ENCODE measurements at regions of chr2 and their contacts with region 1.

Region 1: DNA sequence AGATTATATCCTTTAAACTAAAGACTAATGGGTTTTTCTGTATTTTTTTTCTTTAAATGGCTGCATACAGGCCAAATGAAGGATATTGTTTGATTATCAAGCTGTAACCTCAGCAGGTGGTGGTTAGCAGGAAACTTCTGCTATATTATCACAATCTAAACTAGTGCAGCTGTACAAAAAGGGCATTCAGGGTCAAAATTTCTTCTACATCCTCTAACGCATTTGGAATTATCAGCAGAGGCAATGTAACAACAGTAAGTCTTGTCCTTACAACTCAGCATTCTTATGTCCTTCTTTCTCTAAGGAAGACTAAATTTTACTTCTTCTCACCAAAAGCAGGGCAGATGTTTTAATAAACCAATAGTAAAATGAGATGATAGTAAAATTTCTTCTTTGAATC is 135.8 kb upstream of the FN1 start:
- DNase-seq: no peak
- H3K4me3 ChIP-seq: no peak overlapping the region
- H3K27ac ChIP-seq: no peak overlapping the region
- H3K4me1 ChIP-seq: no peaks in the 10 kb centered on the region
- H3K27me3 ChIP-seq: no peaks in the 10 kb centered on the region
- CTCF ChIP-seq: no peak

Region 2: DNA sequence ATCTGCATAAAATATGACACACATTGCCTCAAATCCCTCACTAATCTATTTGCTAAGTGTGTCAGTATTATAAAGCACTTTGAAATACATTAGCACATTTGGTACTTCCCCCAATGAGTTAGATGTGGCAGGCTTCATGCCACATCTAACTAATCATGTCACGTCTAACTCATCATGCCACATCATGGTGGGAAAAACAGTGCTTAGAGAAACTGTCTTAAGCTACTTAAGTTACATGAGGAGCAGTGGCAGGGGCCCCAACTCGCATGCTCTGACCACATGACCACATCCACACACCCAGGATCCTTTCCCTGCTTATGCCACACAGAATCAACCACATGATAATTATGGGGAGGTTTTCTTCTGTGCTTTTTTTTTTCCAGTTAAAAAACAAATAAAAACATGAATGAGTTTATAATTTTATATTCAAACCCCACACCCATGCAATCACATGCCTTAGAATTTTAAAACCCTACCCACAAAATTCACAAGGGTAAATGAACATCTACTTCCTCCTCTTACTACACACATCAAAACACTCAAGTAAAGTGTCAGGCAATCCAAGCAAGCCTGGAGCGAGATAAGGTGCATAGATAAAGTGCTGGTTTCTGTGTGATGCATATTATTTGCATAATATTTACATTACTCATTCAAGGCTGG is 434.9 kb before region 1 on chr2:
- CTCF ChIA-PET with region 1: no interaction called
- POLR2A ChIA-PET with region 1: interaction called, 47 read pairs
- intact Hi-C with region 1: no loop called
- DNase-seq: peak in 1 of 2 experiments; percentile 88
- H3K4me3 ChIP-seq: peak overlapping the region; percentile 2; the same call in 1 of the 2 replicates
- H3K27ac ChIP-seq: peak overlapping the region; percentile 81
- H3K4me1 ChIP-seq: peaks cover 30% of the 10 kb centered on the region
- H3K27me3 ChIP-seq: no peaks in the 10 kb centered on the region
- CTCF ChIP-seq: no peak

Region 3: GRCh38 chr2:215423234-215423633 is 148.5 kb before region 1 on chr2:
- CTCF ChIA-PET with region 1: no interaction called
- POLR2A ChIA-PET with region 1: interaction called, 13 read pairs
- intact Hi-C with region 1: no loop called
- DNase-seq: no peak
- H3K4me3 ChIP-seq: no peak overlapping the region
- H3K27ac ChIP-seq: no peak overlapping the region
- H3K4me1 ChIP-seq: no peaks in the 10 kb centered on the region
- H3K27me3 ChIP-seq: no peaks in the 10 kb centered on the region
- CTCF ChIP-seq: no peak